K562 (cell line): ENCODE measurements at regions of chr11 and their contacts with region 1.

Region 1: DNA sequence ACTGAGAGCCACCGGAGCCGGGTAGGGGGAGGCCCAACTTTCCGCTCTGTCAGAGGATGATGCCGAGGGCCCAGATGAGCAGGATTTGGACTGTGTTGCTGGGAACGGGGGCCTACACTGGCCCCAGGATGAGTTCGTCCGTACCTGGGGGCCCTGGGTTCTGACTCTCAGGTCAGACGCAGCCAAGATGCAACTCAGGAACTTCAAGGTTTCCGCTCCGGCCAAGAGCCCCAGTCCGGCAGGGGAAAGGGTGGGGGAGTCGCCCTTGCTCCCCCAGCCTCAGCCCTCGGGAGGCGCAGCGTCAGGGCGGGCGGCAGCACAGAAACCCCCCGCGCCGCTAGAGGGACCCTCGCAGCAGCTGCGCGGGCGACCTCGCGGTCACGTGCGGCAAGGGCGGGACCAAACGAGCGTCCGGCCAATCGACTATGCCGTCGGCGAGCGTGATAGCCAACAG is 241 bp upstream of the ARL2 start:
- DNase-seq: peak; percentile 87 to 95 (median 92)
- ATAC-seq: peak; percentile 86
- H3K4me3 ChIP-seq: peak overlapping the region; percentile 67
- H3K27ac ChIP-seq: peak overlapping the region; percentile 93
- H3K4me1 ChIP-seq: peaks cover 10 to 39% of the 10 kb centered on the region in 2 experiments; a peak in 4 of 5 replicates
- H3K27me3 ChIP-seq: no peaks in the 10 kb centered on the region
- CTCF ChIP-seq: peak; percentile 39 to 79 (median 43); a peak in 4 of 6 replicates
- EP300 ChIP-seq: no peak
- POLR2A ChIP-seq: peak; percentile 67; the same call in 1 of the 2 replicates
- RAD21 ChIP-seq: peak; percentile 88 to 89; a peak in 2 of 4 replicates

Region 2: GRCh38 chr11:64960719-64961118 is 53.0 kb before region 1 on chr11:
- CTCF ChIA-PET with region 1: no interaction called
- POLR2A ChIA-PET with region 1: no interaction called
- in situ Hi-C with region 1: no loop called
- intact Hi-C with region 1: no loop called
- DNase-seq: peak in 3 of 4 experiments; percentile 24 to 30 (median 25)
- ATAC-seq: 0 out of 3 replicates have a peak, but pooled peaks have one; percentile 39
- H3K4me3 ChIP-seq: no peak overlapping the region
- H3K27ac ChIP-seq: no peak overlapping the region
- H3K4me1 ChIP-seq: peaks cover 4 to 11% of the 10 kb centered on the region in 2 experiments; a peak in 3 of 5 replicates
- H3K27me3 ChIP-seq: no peaks in the 10 kb centered on the region; a peak in 1 of 5 replicates
- CTCF ChIP-seq: no peak
- EP300 ChIP-seq: peak; percentile 59
- POLR2A ChIP-seq: no peak
- RAD21 ChIP-seq: no peak

Region 3: DNA sequence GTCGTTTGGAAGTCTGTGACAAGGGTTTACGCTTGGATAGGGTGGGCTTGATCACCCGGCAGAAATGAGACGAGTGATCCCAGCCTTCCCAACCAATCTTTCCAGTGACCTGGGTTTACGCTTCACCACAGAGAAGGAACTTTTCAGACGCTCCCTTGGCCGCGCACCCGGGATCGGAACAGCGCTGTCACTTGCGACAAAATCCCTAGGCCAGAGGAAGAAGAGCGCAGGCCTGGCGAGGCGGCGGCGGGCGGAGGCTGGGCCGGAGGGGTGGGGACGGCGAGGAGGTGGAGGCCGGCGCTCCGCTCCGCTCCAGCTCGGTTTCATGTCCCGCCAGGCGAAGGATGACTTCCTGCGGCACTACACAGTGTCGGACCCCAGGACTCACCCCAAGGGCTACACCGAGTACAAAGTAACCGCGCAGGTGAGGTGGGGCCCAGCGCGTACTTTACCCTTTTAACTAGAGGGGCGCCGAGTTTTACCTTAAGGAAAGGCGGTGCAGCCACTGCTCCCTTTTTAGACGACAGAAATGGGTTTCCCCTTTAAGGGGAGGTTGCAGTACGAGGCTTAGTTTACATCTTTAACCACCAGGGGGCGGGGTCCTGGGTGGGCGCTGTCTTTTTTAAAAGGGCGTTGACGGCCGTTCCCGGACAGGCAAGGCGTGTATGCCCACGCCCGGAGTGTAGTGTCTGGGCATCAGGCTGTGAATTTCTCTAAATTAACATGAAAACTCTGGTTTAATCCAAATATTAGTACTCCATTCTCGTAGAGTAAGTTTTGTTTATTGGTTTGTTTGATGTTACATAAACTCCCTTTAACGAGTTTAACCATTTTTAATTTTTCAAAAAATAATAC is 13.7 kb after region 1 on chr11 and contains the start of gene SNX15:
- CTCF ChIA-PET with region 1: no interaction called
- POLR2A ChIA-PET with region 1: interaction called, 19 read pairs
- in situ Hi-C with region 1: no loop called
- intact Hi-C with region 1: no loop called
- DNase-seq: peak; percentile 89 to 98 (median 92)
- ATAC-seq: peak; percentile 98
- H3K4me3 ChIP-seq: peak within 1 kb of the TSS; percentile 55
- H3K27ac ChIP-seq: peak within 1 kb of the TSS; percentile 84
- H3K4me1 ChIP-seq: peaks cover 16 to 29% of the 10 kb centered on the region in 2 experiments; a peak in 4 of 5 replicates
- H3K27me3 ChIP-seq: no peaks in the 10 kb centered on the region
- CTCF ChIP-seq: peak; percentile 53 to 76 (median 69)
- EP300 ChIP-seq: peak; percentile 23; the same call in 1 of the 2 replicates
- POLR2A ChIP-seq: peak; percentile 75
- RAD21 ChIP-seq: peak; percentile 30 to 35; a peak in 3 of 4 replicates
- polyA plus RNA-seq, gene SNX15: 1.8 to 2.8 TPM

Region 4: GRCh38 chr11:65060913-65061408 is 47.2 kb after region 1 on chr11:
- CTCF ChIA-PET with region 1: no interaction called
- POLR2A ChIA-PET with region 1: no interaction called
- in situ Hi-C with region 1: no loop called
- intact Hi-C with region 1: loop called (anchors 5 kb)
- DNase-seq: peak in 2 of 4 experiments; percentile 64
- ATAC-seq: peak; percentile 87
- H3K4me3 ChIP-seq: no peak overlapping the region
- H3K27ac ChIP-seq: 0 out of 3 replicates have a peak overlapping the region, but pooled peaks have one; percentile 2
- H3K4me1 ChIP-seq: peaks cover 16 to 26% of the 10 kb centered on the region in 2 experiments
- H3K27me3 ChIP-seq: no peaks in the 10 kb centered on the region
- CTCF ChIP-seq: peak; percentile 69 to 73 (median 72)
- EP300 ChIP-seq: no peak
- POLR2A ChIP-seq: no peak
- RAD21 ChIP-seq: peak; percentile 29 to 70

Region 5: GRCh38 chr11:65111744-65112414 is 98.2 kb after region 1 on chr11 and contains the start of gene TM7SF2:
- CTCF ChIA-PET with region 1: interaction called, 7 read pairs
- POLR2A ChIA-PET with region 1: interaction called, 3 read pairs
- in situ Hi-C with region 1: no loop called
- intact Hi-C with region 1: loop called (anchors 1 kb)
- DNase-seq: peak; percentile 96 to 99 (median 98)
- ATAC-seq: peak; percentile 90
- H3K4me3 ChIP-seq: peak within 1 kb of the TSS; percentile 44
- H3K27ac ChIP-seq: peak within 1 kb of the TSS; percentile 79
- H3K4me1 ChIP-seq: peaks cover 29 to 62% of the 10 kb centered on the region in 2 experiments
- H3K27me3 ChIP-seq: no peaks in the 10 kb centered on the region
- CTCF ChIP-seq: 0 out of 6 replicates have a peak, but pooled peaks of 1 of the 3 experiments have one; percentile 0
- EP300 ChIP-seq: no peak
- POLR2A ChIP-seq: peak; percentile 88
- RAD21 ChIP-seq: no peak
- polyA plus RNA-seq, gene TM7SF2: 1.2 to 1.4 TPM

Region 6: GRCh38 chr11:65506770-65507505 is 493.2 kb after region 1 on chr11:
- CTCF ChIA-PET with region 1: no interaction called
- POLR2A ChIA-PET with region 1: no interaction called
- in situ Hi-C with region 1: no loop called
- intact Hi-C with region 1: no loop called
- DNase-seq: peak in 1 of 4 experiments; percentile 92
- ATAC-seq: peak; percentile 73
- H3K4me3 ChIP-seq: peak overlapping the region; percentile 84
- H3K27ac ChIP-seq: peak overlapping the region; percentile 99
- H3K4me1 ChIP-seq: peaks cover 8% of the 10 kb centered on the region in 2 experiments; a peak in 4 of 5 replicates
- H3K27me3 ChIP-seq: no peaks in the 10 kb centered on the region
- CTCF ChIP-seq: 0 out of 6 replicates have a peak, but pooled peaks of 1 of the 3 experiments have one; percentile 6
- EP300 ChIP-seq: no peak; the same call in 1 of the 2 replicates
- POLR2A ChIP-seq: peak; percentile 99
- RAD21 ChIP-seq: peak; percentile 14 to 42; a peak in 3 of 4 replicates